Dorsolateral prefrontal cortex (tissue), 120 donors: ENCODE measurements at regions of chr3 and their contacts with region 1.

Region 1: DNA sequence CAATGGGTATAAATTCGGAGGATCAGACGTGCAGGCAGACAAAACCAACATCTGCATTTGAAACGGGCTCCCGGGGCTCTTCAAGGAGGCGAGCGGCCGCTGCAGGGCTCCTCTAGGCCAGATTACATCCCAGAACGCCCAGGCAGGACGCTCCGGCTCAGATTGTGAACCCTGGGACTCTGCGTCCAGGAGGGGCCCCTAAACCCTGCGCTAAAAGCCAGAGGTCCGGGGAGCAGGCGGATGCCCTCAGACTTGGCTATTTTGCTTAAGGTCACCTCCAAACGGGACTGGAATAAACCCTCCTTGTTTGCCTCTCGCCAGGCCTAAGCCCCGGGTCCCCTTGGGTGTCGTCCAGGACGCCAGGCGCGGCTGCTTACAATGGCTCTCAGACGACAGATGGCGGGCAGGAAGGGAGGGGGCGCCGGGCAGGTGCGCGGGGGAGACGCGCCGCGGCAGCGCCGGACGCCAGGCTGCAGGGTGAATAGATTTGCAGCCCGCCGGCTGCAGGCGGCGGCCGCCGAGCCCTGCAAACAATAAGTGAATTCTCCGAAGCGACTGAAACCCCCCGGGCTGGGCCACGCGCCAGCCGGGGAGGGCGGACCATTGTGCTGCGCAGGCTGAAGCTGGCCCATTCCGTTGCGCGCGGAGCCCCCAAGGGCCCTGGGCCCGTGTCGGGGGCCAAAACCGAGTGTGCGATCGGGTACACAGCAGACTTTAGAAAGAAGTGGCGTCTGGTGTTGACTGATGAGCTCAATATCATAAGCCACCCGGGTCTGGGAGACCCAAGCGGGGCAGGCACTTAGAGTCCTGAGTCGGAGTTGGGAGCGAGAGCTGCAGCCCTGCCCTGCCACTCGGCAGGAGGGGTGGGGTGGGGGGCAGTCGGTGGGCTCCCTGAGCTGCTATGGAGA is 32.3 kb upstream of the AMOTL2 start:
- DNase-seq: peak; percentile 71 to 88 (median 84)
- H3K4me3 ChIP-seq: peak overlapping the region in 58 of 59 donors; percentile 15 to 74 (median 52)
- H3K27ac ChIP-seq: peak overlapping the region; percentile 20 to 95 (median 87)
- H3K27me3 ChIP-seq: peaks cover 0 to 7% (median 0%) of the 10 kb centered on the region in 45 donors
- CTCF ChIP-seq: peak in 17 of 56 donors; percentile 5 to 35 (median 18)

Region 2: DNA sequence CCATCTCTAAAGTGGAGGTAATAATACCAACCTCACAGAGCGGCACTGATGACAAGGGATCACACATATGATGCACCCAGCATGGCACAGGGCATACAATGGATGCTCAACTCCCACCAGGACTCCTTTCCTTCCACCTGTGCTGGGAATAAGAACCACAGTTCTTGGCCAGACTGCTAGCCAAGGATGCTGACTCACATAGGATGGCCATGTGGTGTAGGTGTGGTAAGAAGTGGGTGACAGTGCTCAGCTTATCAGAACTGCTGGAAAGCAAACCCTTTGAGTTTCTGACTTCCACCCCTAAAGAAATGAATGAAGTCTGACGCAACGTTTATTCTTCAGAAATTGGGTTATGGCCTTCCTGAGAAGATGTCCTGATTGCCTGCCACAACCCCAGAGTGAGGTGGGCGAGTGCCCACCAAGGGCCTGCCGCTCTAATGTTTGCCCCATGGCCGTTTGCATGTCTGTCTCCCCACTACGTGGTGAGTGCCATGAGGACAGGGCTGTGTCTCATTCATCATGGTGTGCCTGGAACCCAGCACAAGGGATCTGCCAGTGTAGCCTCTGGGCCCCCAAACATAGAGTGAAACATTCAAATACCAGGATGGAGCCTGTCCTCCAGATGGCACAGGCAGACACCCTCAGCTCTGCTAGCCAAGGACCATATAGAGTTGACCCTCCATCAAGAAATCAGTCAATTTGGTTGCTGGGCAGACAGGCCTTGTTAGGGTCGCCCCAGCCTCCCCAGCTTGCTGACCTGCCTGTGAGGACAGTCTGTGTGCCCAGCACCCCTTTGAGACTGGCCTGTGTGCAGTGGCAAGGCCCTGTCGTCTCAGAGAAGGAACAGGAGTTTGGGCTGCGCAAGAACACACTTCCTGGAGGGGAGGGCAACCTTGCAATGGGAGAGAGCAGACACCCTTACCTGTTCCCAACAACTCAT is 319.3 kb before region 1 on chr3:
- intact Hi-C with region 1: no loop called
- DNase-seq: peak in 1 of 10 donors; percentile 19
- H3K4me3 ChIP-seq: no peak overlapping the region
- H3K27ac ChIP-seq: no peak overlapping the region
- H3K27me3 ChIP-seq: no peaks in the 10 kb centered on the region
- CTCF ChIP-seq: no peak

Region 3: GRCh38 chr3:134126153-134126552 is 280.4 kb before region 1 on chr3:
- intact Hi-C with region 1: no loop called
- DNase-seq: no peak
- H3K4me3 ChIP-seq: no peak overlapping the region
- H3K27ac ChIP-seq: no peak overlapping the region
- H3K27me3 ChIP-seq: no peaks in the 10 kb centered on the region
- CTCF ChIP-seq: no peak

Region 4: DNA sequence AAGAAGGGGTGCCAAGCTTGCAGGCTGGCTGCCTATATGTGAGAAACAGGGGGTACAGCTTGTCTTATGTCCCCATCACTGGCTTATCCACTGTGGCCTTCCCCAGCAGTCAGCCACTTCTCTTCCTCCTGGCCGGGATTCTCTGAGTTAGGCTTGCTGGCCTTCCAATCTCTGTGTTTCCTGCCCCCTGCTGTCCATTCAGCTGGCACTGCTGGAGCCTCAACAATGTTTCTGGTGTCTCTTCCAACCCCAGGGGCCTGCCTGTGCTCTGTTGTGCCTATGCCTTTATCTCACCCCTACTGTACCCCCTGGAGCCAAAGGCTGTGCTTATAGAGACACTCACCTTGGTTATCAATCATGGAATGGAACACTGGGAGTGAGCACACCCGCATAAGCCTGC is 42.7 kb after region 1 on chr3:
- intact Hi-C with region 1: loop called (anchors 5 kb)
- DNase-seq: peak; percentile 44 to 77 (median 65)
- H3K4me3 ChIP-seq: no peak overlapping the region
- H3K27ac ChIP-seq: peak overlapping the region in 36 of 59 donors; percentile 6 to 78 (median 53)
- H3K27me3 ChIP-seq: no peaks in the 10 kb centered on the region
- CTCF ChIP-seq: peak in 55 of 56 donors; percentile 14 to 79 (median 60)